ENCODE measurements at regions of chr15 and their contacts with region 1.

Region 1: DNA sequence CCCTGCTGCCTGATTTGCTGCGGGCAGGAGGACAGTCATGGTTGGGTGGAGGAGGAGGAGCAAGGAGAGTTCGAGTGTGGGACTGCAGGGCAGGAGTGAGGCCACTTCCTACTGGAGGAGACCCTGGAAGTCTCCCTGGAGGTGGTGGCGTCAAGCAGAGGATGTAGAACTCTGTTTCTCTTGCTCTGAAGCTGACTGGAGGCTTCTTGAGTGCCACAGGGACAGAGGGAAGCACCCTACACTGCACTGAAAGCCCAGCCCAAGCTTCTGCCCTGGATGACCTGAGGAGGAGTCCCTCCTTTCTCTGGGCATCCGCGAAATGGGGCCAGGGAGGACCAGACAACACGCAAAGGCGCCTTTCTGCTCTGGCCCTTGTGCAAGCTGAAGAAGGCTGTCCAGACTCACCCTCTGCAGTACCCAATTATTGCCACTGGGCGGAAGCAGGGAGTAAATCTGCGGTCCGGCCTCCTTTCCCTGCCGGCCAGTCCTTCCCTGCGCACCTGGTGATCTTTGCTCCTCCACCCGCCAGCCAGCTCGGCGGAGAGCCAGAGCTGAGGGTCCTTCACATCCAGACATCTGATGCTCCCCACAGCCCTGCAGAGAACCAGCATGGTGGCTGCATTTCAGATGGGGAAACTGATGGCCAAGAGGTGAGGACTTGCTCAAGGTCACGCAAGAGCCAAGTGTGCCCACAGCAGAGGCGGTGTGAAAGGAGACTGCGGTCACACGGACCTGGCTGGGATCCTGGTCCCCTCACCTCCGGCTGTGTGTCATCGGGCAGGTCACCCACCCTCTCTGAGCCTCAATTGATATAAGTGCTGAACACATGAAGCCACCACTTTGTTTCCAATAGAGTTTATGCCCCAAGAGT is 207.1 kb downstream of the TBC1D2B start:
- H3K4me3 ChIP-seq: no peak overlapping the region
- H3K27ac ChIP-seq: no peak overlapping the region
- H3K4me1 ChIP-seq: 0 out of 2 replicates have a peak, but pooled peaks cover 2% of the 10 kb centered on the region
- CTCF ChIP-seq: peak; percentile 71

Region 2: DNA sequence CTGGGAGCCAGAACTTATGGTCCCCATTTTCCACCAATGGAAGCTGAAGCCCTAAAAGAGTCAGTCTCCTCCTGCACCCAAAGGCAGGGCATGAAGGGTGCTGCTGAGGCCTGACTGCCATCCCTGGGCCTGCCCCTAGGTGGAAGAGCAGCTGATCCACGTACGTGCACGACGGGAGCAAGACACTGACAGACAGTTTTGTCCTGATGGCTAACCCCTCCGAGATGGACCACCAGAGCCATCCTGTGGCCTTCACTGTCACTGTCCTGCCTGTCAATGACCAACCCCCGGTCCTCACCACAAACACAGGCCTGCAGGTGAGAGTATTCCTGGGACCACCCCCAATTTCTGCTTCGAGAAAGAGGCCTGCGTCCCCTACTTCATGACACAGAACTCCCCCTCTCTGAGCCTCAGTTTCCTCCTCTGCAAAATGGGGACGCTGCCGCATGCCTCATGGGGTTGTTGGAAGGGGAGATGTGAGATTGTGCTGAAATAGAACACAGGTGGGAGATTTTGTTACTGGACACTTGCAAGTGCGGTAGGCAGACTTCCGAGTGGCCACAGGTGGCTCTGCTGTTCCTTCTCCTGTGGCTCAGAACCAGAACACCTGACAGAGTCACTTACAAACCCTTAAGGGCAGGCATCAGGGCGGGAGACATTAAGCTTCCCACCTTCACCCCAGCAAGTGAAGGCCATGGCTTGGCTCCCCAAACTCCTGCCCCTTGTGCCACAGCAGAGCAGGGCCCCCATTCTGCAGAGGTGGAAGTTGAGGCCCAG is 31.7 kb after region 1 on chr15:
- CTCF ChIA-PET with region 1: interaction called, 10 read pairs
- POLR2A ChIA-PET with region 1: no interaction called
- H3K4me3 ChIP-seq: no peak overlapping the region
- H3K27ac ChIP-seq: no peak overlapping the region
- H3K4me1 ChIP-seq: no peaks in the 10 kb centered on the region
- CTCF ChIP-seq: no peak